CD4-positive, alpha-beta T cell (primary cell): ENCODE measurements at regions of chr6 and their contacts with region 1.

Region 1: GRCh38 chr6:151690768-151691562 is 116.5 kb upstream of the ESR1 start:
- DNase-seq: peak in 4 of 14 experiments; percentile 8 to 67 (median 62)
- ATAC-seq: peak; percentile 77
- H3K4me3 ChIP-seq: peak overlapping the region; percentile 58
- H3K4me3 Mint-ChIP-seq: peak overlapping the region; percentile 82
- H3K27ac ChIP-seq: peak overlapping the region; percentile 41 to 71
- H3K27ac Mint-ChIP-seq: peak overlapping the region; percentile 89
- H3K4me1 ChIP-seq: peaks cover 5% of the 10 kb centered on the region
- H3K4me1 Mint-ChIP-seq: peaks cover 28% of the 10 kb centered on the region
- H3K27me3 ChIP-seq: no peaks in the 10 kb centered on the region
- H3K27me3 Mint-ChIP-seq: no peaks in the 10 kb centered on the region
- CTCF ChIP-seq: no peak

Region 2: GRCh38 chr6:151765444-151765886 is 74.5 kb after region 1 on chr6:
- CTCF ChIA-PET with region 1: no interaction called
- POLR2A ChIA-PET with region 1: no interaction called
- intact Hi-C with region 1: loop called (anchors 5 kb)
- DNase-seq: peak in 6 of 14 experiments; percentile 10 to 65 (median 50)
- ATAC-seq: peak; percentile 56
- H3K4me3 ChIP-seq: no peak overlapping the region
- H3K4me3 Mint-ChIP-seq: no peak overlapping the region
- H3K27ac ChIP-seq: no peak overlapping the region
- H3K27ac Mint-ChIP-seq: no peak overlapping the region
- H3K4me1 ChIP-seq: no peaks in the 10 kb centered on the region
- H3K4me1 Mint-ChIP-seq: peaks cover 24% of the 10 kb centered on the region
- H3K27me3 ChIP-seq: no peaks in the 10 kb centered on the region
- H3K27me3 Mint-ChIP-seq: peaks cover 15% of the 10 kb centered on the region
- CTCF ChIP-seq: peak; percentile 72

Region 3: GRCh38 chr6:152068622-152069261 is 377.8 kb after region 1 on chr6:
- CTCF ChIA-PET with region 1: no interaction called
- POLR2A ChIA-PET with region 1: no interaction called
- intact Hi-C with region 1: no loop called
- DNase-seq: no peak
- ATAC-seq: no peak
- H3K4me3 ChIP-seq: no peak overlapping the region
- H3K4me3 Mint-ChIP-seq: no peak overlapping the region
- H3K27ac ChIP-seq: no peak overlapping the region
- H3K27ac Mint-ChIP-seq: no peak overlapping the region
- H3K4me1 ChIP-seq: no peaks in the 10 kb centered on the region
- H3K4me1 Mint-ChIP-seq: no peaks in the 10 kb centered on the region
- H3K27me3 ChIP-seq: no peaks in the 10 kb centered on the region
- H3K27me3 Mint-ChIP-seq: no peaks in the 10 kb centered on the region
- CTCF ChIP-seq: no peak

Region 4: GRCh38 chr6:152343735-152344360 is 652.9 kb after region 1 on chr6:
- CTCF ChIA-PET with region 1: no interaction called
- POLR2A ChIA-PET with region 1: no interaction called
- intact Hi-C with region 1: loop called in 1 of 2 experiments (anchors 5 kb)
- DNase-seq: no peak
- ATAC-seq: no peak
- H3K4me3 ChIP-seq: no peak overlapping the region
- H3K4me3 Mint-ChIP-seq: no peak overlapping the region
- H3K27ac ChIP-seq: no peak overlapping the region
- H3K27ac Mint-ChIP-seq: no peak overlapping the region
- H3K4me1 ChIP-seq: no peaks in the 10 kb centered on the region
- H3K4me1 Mint-ChIP-seq: no peaks in the 10 kb centered on the region
- H3K27me3 ChIP-seq: no peaks in the 10 kb centered on the region
- H3K27me3 Mint-ChIP-seq: peaks cover 7% of the 10 kb centered on the region
- CTCF ChIP-seq: no peak

Region 5: DNA sequence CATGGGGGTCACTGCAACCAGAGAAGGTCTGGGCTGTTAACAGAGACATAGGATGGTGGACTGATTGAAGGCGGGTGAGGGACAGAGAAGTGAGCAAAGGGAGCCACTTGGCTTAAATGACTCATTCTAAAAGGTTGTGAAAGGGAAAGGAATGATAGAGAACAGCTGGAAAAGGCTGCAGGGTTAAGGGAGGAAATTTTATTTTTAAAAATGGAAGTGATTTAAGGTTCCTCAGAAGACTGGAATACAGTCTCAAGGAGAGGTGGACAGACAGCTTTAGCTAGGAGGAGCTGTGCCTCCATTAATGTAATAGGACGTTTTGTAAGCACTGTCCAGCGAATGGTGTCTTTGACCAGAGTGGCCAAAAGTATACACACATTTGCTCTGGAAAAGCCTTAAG is 1393.4 kb after region 1 on chr6:
- CTCF ChIA-PET with region 1: no interaction called
- POLR2A ChIA-PET with region 1: no interaction called
- intact Hi-C with region 1: no loop called
- DNase-seq: no peak
- ATAC-seq: no peak
- H3K4me3 ChIP-seq: no peak overlapping the region
- H3K4me3 Mint-ChIP-seq: no peak overlapping the region
- H3K27ac ChIP-seq: no peak overlapping the region
- H3K27ac Mint-ChIP-seq: no peak overlapping the region
- H3K4me1 ChIP-seq: no peaks in the 10 kb centered on the region
- H3K4me1 Mint-ChIP-seq: no peaks in the 10 kb centered on the region
- H3K27me3 ChIP-seq: peaks cover 0 to 5% of the 10 kb centered on the region in 2 experiments
- H3K27me3 Mint-ChIP-seq: peaks cover 21% of the 10 kb centered on the region
- CTCF ChIP-seq: no peak